ENCODE measurements at regions of chr6 and their contacts with region 1.

Region 1: GRCh38 chr6:116287689-116288282 is 8.1 kb upstream of the TSPYL1 start:
- DNase-seq: peak; percentile 69
- H3K4me3 Mint-ChIP-seq: no peak overlapping the region
- H3K27ac Mint-ChIP-seq: no peak overlapping the region
- H3K4me1 Mint-ChIP-seq: no peaks in the 10 kb centered on the region
- H3K27me3 Mint-ChIP-seq: no peaks in the 10 kb centered on the region
- CTCF ChIP-seq: peak; percentile 83

Region 2: DNA sequence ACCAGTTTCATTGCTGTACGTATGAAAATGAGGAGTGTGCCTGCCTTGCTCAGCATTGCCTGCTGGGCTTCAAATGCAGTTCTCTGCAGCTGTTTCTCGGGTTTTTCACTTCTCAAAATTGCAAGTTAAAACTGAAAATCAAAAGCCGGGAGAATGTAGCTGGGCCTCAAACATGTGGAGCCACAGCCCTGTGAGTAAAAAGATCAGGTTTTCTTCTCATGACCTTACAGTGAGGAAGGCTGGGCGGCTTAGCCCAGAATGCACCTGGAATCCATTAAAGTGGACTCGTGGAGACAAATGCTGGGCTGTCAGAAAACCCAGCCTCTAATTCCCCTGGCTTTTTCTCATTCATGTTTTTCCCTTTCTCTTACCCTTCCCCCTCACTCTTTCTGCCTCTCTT is 117.4 kb after region 1 on chr6:
- CTCF ChIA-PET with region 1: interaction called, 42 read pairs
- POLR2A ChIA-PET with region 1: interaction called, 4 read pairs
- intact Hi-C with region 1: loop called (anchors 1 kb)
- DNase-seq: no peak
- H3K4me3 Mint-ChIP-seq: no peak overlapping the region
- H3K27ac Mint-ChIP-seq: no peak overlapping the region
- H3K4me1 Mint-ChIP-seq: peaks cover 21% of the 10 kb centered on the region
- H3K27me3 Mint-ChIP-seq: no peaks in the 10 kb centered on the region
- CTCF ChIP-seq: no peak

Region 3: GRCh38 chr6:116411284-116411623 is 123.5 kb after region 1 on chr6:
- CTCF ChIA-PET with region 1: interaction called, 12 read pairs
- POLR2A ChIA-PET with region 1: interaction called, 3 read pairs
- intact Hi-C with region 1: no loop called
- DNase-seq: peak; percentile 39
- H3K4me3 Mint-ChIP-seq: no peak overlapping the region
- H3K27ac Mint-ChIP-seq: no peak overlapping the region
- H3K4me1 Mint-ChIP-seq: peaks cover 42% of the 10 kb centered on the region
- H3K27me3 Mint-ChIP-seq: no peaks in the 10 kb centered on the region
- CTCF ChIP-seq: no peak

Region 4: GRCh38 chr6:116444092-116444491 is 156.3 kb after region 1 on chr6:
- CTCF ChIA-PET with region 1: interaction called, 22 read pairs
- POLR2A ChIA-PET with region 1: interaction called, 10 read pairs
- intact Hi-C with region 1: loop called (anchors 5 kb)
- DNase-seq: peak; percentile 53
- H3K4me3 Mint-ChIP-seq: no peak overlapping the region
- H3K27ac Mint-ChIP-seq: peak overlapping the region; percentile 37
- H3K4me1 Mint-ChIP-seq: peaks cover 24% of the 10 kb centered on the region
- H3K27me3 Mint-ChIP-seq: no peaks in the 10 kb centered on the region
- CTCF ChIP-seq: peak; percentile 54

Region 5: DNA sequence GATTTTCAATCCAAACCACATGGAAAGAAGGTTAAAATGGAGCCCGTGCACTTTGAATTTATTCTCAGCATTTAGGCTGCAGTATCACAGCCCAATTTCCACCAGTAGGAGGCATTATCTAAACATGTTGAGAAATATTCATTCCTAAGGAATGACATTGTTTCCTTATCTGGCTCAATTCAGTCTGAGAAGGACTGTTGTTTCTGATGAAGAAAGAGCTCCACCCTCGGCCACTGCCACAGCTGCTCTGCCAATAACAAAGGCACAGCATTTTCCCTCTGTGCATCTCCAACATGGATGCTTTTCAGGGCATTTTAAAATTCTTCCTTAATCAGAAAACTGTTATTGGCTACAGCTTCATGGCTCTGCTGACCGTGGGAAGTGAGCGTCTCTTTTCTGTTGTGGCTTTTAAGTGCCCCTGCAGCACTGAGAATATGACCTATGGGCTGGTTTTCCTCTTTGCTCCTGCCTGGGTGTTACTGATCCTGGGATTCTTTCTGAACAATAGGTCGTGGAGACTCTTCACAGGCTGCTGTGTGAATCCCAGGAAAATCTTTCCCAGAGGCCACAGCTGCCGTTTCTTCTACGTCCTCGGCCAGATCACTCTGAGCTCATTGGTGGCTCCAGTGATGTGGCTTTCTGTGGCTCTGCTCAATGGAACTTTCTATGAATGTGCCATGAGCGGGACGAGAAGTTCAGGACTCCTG is 223.8 kb after region 1 on chr6 and contains the start of gene CALHM5:
- CTCF ChIA-PET with region 1: interaction called, 7 read pairs
- POLR2A ChIA-PET with region 1: interaction called, 3 read pairs
- intact Hi-C with region 1: loop called (anchors 5 kb)
- DNase-seq: peak; percentile 75
- H3K4me3 Mint-ChIP-seq: no peak within 1 kb of the TSS
- H3K27ac Mint-ChIP-seq: no peak within 1 kb of the TSS
- H3K4me1 Mint-ChIP-seq: peaks cover 6% of the 10 kb centered on the region
- H3K27me3 Mint-ChIP-seq: no peaks in the 10 kb centered on the region
- CTCF ChIP-seq: peak; percentile 59
- total RNA-seq, gene CALHM5: not detected in 2 replicates

Region 6: DNA sequence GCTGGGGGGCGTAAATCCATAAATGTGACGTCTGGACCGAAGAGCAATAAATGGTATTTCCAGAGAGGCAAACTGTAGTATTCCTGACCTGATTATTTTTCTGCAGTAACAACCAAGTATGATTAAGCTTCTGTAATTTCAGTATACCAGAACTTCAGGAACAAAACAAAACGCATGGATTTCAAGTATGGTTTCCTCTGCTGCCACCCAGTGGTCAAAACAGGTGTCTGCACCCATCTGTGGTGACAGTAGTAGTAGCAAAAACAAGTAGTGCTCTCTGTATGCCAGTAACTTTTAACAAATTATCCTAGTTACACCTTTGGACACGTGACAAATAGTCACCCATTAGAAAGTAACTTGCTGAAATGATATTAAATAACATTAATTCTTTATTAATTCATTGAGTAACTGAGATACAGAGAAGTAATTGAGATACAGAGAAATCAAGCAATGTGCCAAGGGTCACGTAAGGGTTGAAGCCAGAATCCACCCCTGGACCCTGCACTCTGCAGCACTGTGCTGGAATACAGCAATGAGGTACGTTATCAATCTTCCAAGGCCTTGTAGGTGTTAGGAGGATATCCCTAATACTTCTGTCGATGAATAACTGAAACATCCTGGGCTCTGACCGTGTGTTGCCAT is 273.7 kb after region 1 on chr6:
- CTCF ChIA-PET with region 1: interaction called, 29 read pairs
- POLR2A ChIA-PET with region 1: no interaction called
- intact Hi-C with region 1: loop called (anchors 1 kb)
- DNase-seq: peak; percentile 75
- H3K4me3 Mint-ChIP-seq: no peak overlapping the region
- H3K27ac Mint-ChIP-seq: no peak overlapping the region
- H3K4me1 Mint-ChIP-seq: peaks cover 6% of the 10 kb centered on the region
- H3K27me3 Mint-ChIP-seq: no peaks in the 10 kb centered on the region
- CTCF ChIP-seq: peak; percentile 81